Activated naive CD4-positive, alpha-beta T cell treated with anti-CD3 and anti-CD28 coated beads for 36 hours (primary cell): ENCODE measurements at regions of chr11 and their contacts with region 1.

Region 1: DNA sequence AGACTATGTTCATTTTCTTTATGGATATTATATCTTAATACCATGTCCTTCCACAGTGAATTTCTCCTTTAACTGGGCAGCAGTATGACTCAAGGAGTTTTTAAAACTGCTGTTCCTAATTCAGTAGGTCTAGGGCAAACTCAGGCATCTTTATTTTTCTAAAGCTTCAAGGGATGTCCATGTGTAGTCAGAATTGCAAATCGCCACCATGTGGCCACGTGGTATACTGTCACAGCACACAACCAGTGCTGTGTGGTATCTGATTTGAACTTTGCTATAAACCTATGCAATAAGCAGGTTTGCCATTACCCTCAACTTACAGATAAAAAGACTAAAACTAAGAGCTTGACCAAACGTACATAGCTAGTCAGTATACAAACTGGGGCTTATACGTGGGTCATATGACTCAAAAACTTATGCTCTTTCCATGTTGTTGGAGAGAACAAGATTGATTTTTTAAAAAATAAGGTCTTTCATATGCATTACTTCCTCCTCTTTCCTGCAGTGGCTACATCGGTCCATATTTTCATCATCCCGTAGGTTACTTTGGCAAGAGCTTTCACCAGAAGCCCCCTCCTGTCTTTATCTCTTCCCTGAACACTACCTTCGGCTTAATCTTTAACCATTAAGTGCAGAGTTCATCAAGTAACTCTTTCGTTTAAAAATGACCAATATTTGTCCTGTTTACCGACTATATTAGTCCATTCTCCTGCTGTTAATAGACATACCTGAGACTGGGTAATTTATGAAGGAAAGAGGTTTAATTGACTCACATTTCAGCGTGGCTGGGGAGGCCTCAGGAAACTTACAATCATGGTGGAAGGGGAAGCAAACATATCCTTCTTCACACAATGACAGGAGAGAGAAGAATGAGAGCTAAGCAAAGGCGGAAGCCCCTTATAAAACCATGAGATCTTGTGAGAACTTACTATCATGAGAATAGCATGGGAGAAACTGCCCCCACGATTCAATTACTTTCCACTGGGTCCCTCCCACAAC is 8.0 kb upstream of the HTATIP2 start:
- DNase-seq: peak; percentile 56
- H3K4me3 Mint-ChIP-seq: no peak overlapping the region
- H3K27ac Mint-ChIP-seq: no peak overlapping the region
- H3K4me1 Mint-ChIP-seq: peaks cover 9% of the 10 kb centered on the region
- H3K27me3 Mint-ChIP-seq: no peaks in the 10 kb centered on the region

Region 2: DNA sequence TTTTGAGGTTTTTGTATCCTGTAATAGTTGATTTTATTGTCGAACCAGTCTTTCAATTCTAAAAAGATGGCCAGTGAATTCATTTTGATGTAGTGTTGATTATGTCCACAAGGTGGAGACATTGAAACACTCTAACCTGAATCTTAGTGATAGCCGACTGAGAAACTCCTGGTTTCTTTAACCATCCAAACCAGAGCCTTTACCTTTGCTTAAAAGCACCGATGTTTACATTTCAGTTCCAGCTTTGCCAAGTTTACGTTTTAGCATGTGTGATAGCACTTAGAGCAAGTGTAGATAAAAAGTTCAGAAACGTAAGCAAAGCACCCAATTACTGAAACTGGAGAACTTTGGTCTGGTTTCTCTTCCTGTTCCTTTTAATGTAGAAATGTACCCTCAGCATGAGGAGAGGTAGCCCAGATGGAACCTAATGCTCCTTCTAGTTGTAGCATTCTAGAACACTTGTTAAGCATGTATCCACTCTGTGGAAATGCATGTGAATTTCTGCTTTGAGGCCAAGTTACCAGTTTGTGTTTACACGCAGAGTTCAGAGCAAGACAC is 403.9 kb before region 1 on chr11:
- CTCF ChIA-PET with region 1: interaction called, 3 read pairs
- intact Hi-C with region 1: loop called (anchors 1 kb)
- DNase-seq: no peak
- H3K4me3 Mint-ChIP-seq: peak overlapping the region; percentile 19
- H3K27ac Mint-ChIP-seq: no peak overlapping the region
- H3K4me1 Mint-ChIP-seq: peaks cover 5% of the 10 kb centered on the region
- H3K27me3 Mint-ChIP-seq: peaks cover 2% of the 10 kb centered on the region

Region 3: GRCh38 chr11:20243974-20244373 is 111.5 kb before region 1 on chr11:
- CTCF ChIA-PET with region 1: no interaction called
- intact Hi-C with region 1: loop called (anchors 1 kb)
- DNase-seq: no peak
- H3K4me3 Mint-ChIP-seq: no peak overlapping the region
- H3K27ac Mint-ChIP-seq: no peak overlapping the region
- H3K4me1 Mint-ChIP-seq: no peaks in the 10 kb centered on the region
- H3K27me3 Mint-ChIP-seq: peaks cover 15% of the 10 kb centered on the region

Region 4: DNA sequence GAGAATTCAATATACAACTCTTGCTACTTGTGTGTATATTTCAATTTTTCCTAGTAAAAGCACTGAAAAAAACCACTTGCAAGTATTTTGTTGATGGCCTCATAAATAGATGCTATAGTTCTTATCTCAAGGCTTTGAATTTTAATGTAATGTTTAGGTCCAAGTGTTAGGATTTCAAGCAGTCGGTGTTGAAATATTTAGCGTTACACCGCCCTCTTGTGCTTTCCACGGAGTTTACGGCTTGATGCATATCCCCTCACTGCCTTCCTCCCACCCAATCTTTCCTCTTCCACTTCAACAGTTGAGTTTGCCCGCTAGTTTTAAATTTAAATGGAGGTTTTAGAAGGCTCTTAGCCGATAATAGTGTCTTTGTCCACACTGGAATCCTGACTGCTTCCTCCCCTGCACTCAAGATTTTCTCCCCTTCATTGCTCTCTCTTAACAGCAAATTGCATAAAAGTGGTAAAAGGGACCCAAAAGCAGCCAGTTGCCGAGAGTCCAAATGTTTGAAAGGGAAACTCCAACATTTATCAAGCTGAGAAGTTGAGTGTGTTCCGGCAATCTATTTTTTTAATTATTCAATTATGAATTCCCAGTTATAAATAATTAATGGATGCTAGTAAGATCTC is 17.9 kb before region 1 on chr11:
- CTCF ChIA-PET with region 1: interaction called, 15 read pairs
- intact Hi-C with region 1: no loop called
- DNase-seq: peak; percentile 35
- H3K4me3 Mint-ChIP-seq: no peak overlapping the region
- H3K27ac Mint-ChIP-seq: no peak overlapping the region
- H3K4me1 Mint-ChIP-seq: no peaks in the 10 kb centered on the region
- H3K27me3 Mint-ChIP-seq: peaks cover 48% of the 10 kb centered on the region